ENCODE measurements at regions of chr19 and their contacts with region 1.

Region 1: DNA sequence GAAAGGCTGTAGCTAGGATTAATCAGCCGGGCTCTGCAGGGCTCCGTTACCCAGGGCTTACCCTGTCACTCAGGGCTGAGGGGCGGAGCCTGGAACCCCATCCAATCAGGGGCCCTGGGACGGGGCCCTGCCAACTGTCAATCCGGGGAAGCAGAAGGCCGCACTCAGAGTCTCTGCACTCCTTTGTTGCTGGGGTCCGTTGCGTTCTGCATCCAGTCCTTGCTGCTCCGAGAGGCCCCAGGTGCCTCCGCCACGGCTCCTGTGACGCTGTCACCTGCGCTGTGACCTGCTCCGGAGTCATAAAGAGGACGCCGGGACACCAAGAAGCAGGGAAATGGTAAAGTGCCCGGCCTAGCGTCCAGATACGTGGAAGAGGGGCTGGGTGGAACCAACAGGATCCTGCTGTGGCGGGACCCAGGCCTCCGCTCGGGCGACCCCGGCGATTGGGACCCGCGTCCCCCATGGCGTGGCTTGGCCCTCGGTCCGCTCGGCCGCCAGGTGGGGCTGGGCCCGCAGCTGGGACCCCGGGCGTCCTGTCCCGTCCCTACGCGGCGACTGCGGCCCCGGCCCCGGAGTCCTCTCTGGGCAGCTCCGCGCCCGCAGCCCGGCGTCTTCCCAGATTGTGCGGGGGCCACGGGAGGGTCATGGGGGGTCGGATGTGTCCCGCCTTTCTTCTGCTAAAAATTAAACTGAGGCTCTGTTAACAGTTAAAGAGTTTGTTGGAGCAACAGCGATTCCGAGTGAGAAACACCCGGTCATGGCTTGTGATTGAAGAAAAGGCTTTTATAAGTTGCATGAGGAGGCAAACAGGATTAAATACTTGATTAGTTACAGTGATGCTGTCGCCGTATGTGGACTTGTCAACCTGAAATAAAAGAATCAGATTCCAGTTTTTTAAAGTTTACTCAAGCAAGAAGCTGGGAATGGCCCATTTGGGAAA is at the start of gene ZNF491:
- DNase-seq: peak; percentile 69 to 90 (median 79)
- ATAC-seq: peak; percentile 97
- H3K4me3 Mint-ChIP-seq: peak within 1 kb of the TSS; percentile 90 to 96 (median 94)
- H3K27ac Mint-ChIP-seq: peak within 1 kb of the TSS; percentile 66 to 95 (median 92)
- H3K4me1 Mint-ChIP-seq: peaks cover 12 to 19% (median 16%) of the 10 kb centered on the region in 4 donors
- H3K27me3 Mint-ChIP-seq: no peaks in the 10 kb centered on the region
- polyA plus RNA-seq, gene ZNF491: 0.11 to 0.69 (median 0.16) TPM

Region 2: DNA sequence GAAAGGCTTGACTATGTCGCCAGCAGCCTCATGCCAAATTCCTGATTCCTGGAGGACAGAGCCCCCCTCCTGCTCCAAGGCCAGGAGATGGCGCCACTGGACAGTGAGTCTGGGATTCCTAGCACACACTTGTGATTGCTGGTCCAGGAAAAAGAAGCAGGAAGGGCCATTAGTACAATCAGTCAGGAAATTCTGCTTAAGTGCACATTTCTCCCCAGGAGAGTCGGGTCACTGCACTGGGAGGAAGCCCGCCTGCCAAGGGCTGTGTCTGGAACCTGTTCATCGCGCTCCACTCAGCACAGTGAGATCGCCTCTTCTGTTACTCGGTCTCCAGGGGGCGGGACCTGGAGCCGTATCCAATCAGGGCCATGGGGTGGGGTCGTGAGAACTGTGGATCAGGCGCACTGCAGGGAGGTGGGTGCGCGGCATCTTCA is 125.0 kb before region 1 on chr19:
- POLR2A ChIA-PET with region 1: no interaction called
- DNase-seq: peak in 1 of 10 donors; percentile 6
- ATAC-seq: peak in 1 of 2 donors; percentile 66
- H3K4me3 Mint-ChIP-seq: peak overlapping the region; percentile 26 to 67 (median 54)
- H3K27ac Mint-ChIP-seq: peak overlapping the region in 1 of 10 donors; percentile 7
- H3K4me1 Mint-ChIP-seq: peaks cover 5 to 9% (median 6%) of the 10 kb centered on the region in 4 donors
- H3K27me3 Mint-ChIP-seq: peaks cover 10 to 42% (median 28%) of the 10 kb centered on the region in 5 donors

Region 3: GRCh38 chr19:11766597-11767591 is 31.8 kb before region 1 on chr19 and contains the start of gene ZNF441:
- POLR2A ChIA-PET with region 1: interaction called, 11 read pairs
- DNase-seq: peak; percentile 80 to 96 (median 90)
- ATAC-seq: peak; percentile 93 to 96
- H3K4me3 Mint-ChIP-seq: peak within 1 kb of the TSS; percentile 97 to 99 (median 98)
- H3K27ac Mint-ChIP-seq: peak within 1 kb of the TSS; percentile 95 to 98 (median 97)
- H3K4me1 Mint-ChIP-seq: peaks cover 9 to 27% (median 24%) of the 10 kb centered on the region in 4 donors
- H3K27me3 Mint-ChIP-seq: peaks cover 0 to 6% (median 0%) of the 10 kb centered on the region in 5 donors
- polyA plus RNA-seq, gene ZNF441: 3.6 to 7.0 (median 5.5) TPM

Region 4: DNA sequence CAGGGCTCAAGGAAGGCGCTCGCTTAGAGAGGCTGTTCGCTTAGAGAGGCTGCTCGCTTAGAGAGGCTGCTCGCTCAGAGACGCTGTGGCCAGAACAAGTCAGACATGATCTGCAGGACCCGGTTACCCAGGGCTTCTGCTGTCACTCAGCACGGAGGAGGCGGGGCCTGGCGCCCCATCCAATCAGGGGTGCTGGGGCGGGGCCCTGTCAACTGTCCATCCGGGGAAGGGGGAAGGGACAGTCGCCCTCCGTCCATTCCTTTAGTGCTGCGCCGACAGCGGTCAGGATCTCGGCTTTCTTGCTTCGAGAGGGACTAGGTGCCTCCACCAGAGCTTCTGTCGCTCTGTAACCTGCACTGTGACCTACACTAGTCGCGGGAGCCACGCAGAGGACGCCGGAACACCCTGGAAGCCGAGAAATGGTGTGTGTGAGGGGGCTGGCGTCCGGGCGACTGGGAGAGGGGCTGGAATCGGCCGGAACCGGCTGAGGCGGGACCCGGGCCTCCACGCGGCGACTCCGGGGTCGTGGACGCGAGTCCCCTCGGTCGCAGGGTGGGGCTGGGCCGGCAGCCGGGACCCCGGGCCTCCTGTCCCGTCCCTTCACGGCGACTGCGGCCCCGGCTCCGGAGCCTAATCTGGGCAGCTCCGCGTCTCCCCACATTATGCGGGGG is 15.5 kb after region 1 on chr19 and contains the start of gene ZNF440:
- POLR2A ChIA-PET with region 1: interaction called, 15 read pairs
- DNase-seq: peak; percentile 65 to 88 (median 75)
- ATAC-seq: peak; percentile 98
- H3K4me3 Mint-ChIP-seq: peak within 1 kb of the TSS; percentile 91 to 96 (median 94)
- H3K27ac Mint-ChIP-seq: peak within 1 kb of the TSS; percentile 70 to 94 (median 90)
- H3K4me1 Mint-ChIP-seq: peaks cover 7 to 37% (median 30%) of the 10 kb centered on the region in 4 donors
- H3K27me3 Mint-ChIP-seq: no peaks in the 10 kb centered on the region
- polyA plus RNA-seq, gene ZNF440: 1.5 to 3.9 (median 3.2) TPM

Measured in naive thymus-derived CD8-positive, alpha-beta T cell (primary cell).